Left cardiac atrium (tissue), 4 donors: ENCODE measurements at regions of chr10 and their contacts with region 1.

Region 1: GRCh38 chr10:34824870-34825269 is 9.8 kb upstream of the PARD3 start:
- DNase-seq: no peak
- ATAC-seq: peak in 1 of 2 donors; percentile 53

Region 2: GRCh38 chr10:34960983-34961382 is 136.1 kb after region 1 on chr10:
- intact Hi-C with region 1: loop called in 1 of 2 experiments (anchors 10 kb)
- DNase-seq: no peak
- ATAC-seq: peak; percentile 70 to 81